PC-3 (cell line): ENCODE measurements at regions of chr2 and their contacts with region 1.

Region 1: DNA sequence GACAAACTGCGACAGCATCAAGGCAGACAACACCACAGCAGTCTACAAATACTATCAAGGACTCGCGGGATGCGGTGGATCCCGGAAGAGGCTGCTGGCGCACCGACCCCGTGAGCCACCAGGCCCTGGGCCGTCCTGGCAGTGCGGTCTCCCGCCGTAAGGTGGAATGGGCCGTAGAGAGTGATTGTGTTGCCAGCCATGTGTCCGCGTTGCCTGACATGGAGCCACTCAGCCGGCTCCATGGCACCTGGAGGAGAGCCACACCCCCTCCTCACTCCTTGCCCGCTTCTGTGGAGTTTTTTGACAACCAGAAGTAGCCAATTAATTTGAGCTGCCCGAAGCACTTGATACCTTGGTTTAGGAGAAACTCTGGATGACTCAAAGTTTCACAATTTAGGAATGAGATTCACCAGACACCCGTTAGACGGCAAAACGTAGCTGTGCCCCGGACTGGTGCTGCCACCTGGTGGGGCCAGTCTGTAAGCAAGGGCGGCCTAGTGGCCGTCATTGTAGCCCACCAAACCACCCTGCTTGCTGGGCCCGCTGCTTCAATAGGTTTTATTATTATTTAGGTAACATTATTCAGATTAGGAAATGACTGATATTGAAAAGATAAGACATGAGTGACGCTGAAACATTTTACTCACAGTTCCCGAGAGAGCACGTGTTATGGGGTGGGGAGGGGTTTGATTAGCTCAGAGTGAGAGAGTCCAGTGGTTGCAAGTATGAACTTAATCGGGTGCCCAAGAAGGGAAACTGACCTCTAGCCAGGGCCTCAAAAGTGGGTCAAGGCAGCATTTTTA is 10.2 kb upstream of the IMP4 start:
- DNase-seq: peak; percentile 84
- ATAC-seq: peak; percentile 56
- H3K4me3 ChIP-seq: peak overlapping the region; percentile 49
- H3K27ac ChIP-seq: no peak overlapping the region
- H3K4me1 ChIP-seq: peaks cover 18% of the 10 kb centered on the region
- H3K27me3 ChIP-seq: peaks cover 8% of the 10 kb centered on the region
- CTCF ChIP-seq: peak; percentile 98

Region 2: GRCh38 chr2:130181325-130181879 is 151.1 kb before region 1 on chr2 and contains the start of gene SMPD4:
- CTCF ChIA-PET with region 1: no interaction called
- POLR2A ChIA-PET with region 1: interaction called, 5 read pairs
- intact Hi-C with region 1: loop called (anchors 1 kb)
- DNase-seq: peak; percentile 93
- ATAC-seq: peak; percentile 58
- H3K4me3 ChIP-seq: peak within 1 kb of the TSS; percentile 95
- H3K27ac ChIP-seq: peak within 1 kb of the TSS; percentile 69
- H3K4me1 ChIP-seq: peaks cover 13% of the 10 kb centered on the region
- H3K27me3 ChIP-seq: no peaks in the 10 kb centered on the region
- CTCF ChIP-seq: no peak
- total RNA-seq, gene SMPD4: 64.4 and 82.2 TPM in 2 replicates

Region 3: DNA sequence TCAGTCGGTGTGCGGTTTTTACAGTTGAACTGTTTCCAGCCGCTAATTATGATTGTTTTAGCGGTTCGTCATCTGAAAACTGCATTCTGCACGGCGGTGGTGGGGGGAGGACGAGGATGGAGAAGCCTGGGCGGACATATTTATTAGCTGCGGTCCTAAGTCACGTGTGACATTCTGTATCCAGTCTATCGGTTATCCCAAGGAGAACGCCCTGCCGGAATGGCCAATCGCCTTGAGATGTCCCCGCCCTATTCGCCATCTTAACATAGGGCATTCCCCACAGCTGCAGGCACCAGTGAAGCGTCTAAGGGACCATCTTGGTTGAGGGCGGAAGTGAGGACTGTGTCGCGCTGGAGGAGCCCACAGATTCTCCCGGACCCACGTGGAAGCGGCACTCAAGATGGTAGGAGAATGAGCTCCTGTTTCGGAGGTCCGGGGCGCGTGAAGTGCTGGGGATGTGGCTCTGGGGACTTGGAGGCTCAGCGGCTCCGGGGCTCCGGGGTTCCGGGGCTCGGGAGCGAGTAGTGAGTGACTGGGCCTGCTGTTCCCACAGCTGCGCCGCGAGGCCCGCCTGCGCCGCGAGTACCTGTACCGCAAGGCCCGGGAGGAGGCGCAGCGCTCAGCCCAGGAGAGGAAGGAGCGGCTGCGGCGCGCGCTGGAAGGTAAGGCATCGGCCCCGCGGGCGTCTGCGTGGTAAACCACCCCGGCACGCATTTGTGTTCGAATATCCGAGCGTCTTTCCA is 10.2 kb after region 1 on chr2 and contains the start of gene IMP4:
- CTCF ChIA-PET with region 1: no interaction called
- POLR2A ChIA-PET with region 1: no interaction called
- intact Hi-C with region 1: no loop called
- DNase-seq: peak; percentile 98
- ATAC-seq: peak; percentile 89
- H3K4me3 ChIP-seq: peak within 1 kb of the TSS; percentile 71
- H3K27ac ChIP-seq: peak within 1 kb of the TSS; percentile 49
- H3K4me1 ChIP-seq: peaks cover 7% of the 10 kb centered on the region
- H3K27me3 ChIP-seq: no peaks in the 10 kb centered on the region
- CTCF ChIP-seq: peak; percentile 43; the same call in 1 of the 2 replicates
- total RNA-seq, gene IMP4: 203 and 207 TPM in 2 replicates